Left ventricle myocardium superior (tissue), 1 donor: ENCODE measurements at regions of chr11 and their contacts with region 1.

Region 1: DNA sequence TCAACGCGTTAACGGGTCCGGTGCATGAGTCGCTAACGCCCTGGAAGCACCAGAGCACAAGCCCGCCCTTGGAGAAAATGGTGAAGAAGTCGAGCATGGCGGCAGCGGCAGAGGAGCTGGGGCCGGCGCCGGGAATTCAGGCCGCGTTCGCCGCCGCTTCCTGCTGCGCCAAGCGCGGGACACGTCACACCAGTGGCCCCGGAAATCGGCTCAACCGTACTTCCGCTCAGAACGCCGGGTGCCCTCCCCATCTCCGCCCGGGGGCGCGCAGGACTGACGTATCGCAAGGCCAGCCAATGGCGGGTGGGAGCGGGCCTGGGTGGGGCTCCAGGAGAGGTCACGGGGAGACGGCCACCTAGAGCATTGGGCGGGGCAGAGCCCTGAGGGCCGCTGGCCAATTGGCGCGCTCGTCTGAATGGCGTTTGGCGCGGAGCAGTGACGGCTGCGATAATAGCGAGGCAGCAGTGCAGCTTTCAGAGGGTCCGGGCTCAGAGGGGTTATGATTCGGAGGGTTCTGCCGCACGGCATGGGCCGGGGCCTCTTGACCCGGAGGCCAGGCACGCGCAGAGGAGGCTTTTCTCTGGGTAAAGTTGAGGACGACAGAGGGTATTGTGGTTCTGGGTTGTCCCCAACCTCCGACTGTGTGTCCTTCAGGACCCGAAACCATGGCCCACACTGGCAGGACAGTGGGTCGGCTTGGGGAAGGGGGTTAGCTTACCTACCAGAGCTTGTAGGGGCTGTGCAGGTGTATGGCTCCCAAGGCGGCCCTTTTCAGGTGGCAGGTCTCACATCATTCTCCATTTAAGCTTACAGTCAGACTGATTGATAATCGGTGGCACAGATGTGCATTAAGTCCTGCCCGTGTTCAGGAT is at the starts of genes FOXRED1 and SRPRA:
- DNase-seq: peak; percentile 100
- ATAC-seq: peak; percentile 99
- total RNA-seq, gene FOXRED1: 29.1 TPM
- total RNA-seq, gene SRPRA: 68.6 TPM

Region 2: GRCh38 chr11:126122863-126123262 is 146.1 kb before region 1 on chr11:
- intact Hi-C with region 1: no loop called
- DNase-seq: no peak
- ATAC-seq: peak; percentile 31

Region 3: GRCh38 chr11:126211235-126212088 is 57.5 kb before region 1 on chr11 and contains the starts of genes FAM118B and RPUSD4:
- intact Hi-C with region 1: loop called (anchors 10 kb)
- DNase-seq: peak; percentile 99
- ATAC-seq: peak; percentile 99
- total RNA-seq, gene FAM118B: 25.1 TPM
- total RNA-seq, gene RPUSD4: 40.0 TPM